ENCODE measurements at regions of chr5 and their contacts with region 1.

Region 1: DNA sequence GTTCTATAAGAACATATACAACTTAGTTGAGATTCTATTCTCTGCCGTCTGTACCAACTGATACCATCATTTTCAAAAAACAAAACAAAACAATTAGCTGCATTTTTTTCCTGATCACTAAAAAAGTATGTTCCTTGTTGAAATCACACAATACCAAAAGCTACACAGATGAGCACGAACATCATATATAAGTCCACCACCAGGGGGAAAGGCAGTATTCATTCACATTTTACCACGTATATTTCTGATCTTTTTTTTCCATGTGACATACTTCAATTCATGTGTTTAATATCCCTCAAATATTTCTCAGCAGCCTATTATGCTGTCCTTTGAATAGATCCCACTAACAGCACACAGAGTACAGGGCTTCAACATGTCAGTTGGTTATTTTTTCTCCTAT is 40.6 kb downstream of the IRX2 start:
- DNase-seq: peak; percentile 38
- ATAC-seq: peak; percentile 48
- H3K4me3 ChIP-seq: no peak overlapping the region
- H3K27ac ChIP-seq: no peak overlapping the region
- H3K4me1 ChIP-seq: no peaks in the 10 kb centered on the region
- H3K27me3 ChIP-seq: peaks cover 55% of the 10 kb centered on the region
- CTCF ChIP-seq: peak; percentile 59

Region 2: DNA sequence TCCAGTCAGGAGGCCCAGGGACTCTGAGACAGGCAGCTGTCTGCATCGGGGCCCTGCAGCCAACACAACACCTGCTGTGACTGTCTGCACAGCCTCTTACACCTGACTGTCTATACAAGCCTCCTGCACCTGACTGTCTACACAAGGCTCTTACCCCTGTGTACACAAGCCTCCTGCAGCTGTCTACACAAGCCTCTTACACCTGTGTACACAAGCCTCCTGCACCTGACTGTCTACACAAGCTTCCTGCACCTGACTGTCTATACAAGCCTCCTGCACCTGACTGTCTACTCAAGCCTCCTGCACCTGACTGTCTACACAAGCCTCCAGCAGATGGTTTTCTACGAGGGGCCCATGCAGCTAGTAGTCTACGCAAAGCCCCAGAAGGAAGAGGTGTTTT is 21.9 kb after region 1 on chr5:
- CTCF ChIA-PET with region 1: no interaction called
- POLR2A ChIA-PET with region 1: no interaction called
- intact Hi-C with region 1: no loop called
- DNase-seq: no peak
- ATAC-seq: no peak
- H3K4me3 ChIP-seq: no peak overlapping the region
- H3K27ac ChIP-seq: no peak overlapping the region
- H3K4me1 ChIP-seq: no peaks in the 10 kb centered on the region
- H3K27me3 ChIP-seq: peaks cover 66% of the 10 kb centered on the region
- CTCF ChIP-seq: no peak

Region 3: GRCh38 chr5:2746561-2747032 is 35.7 kb after region 1 on chr5:
- CTCF ChIA-PET with region 1: interaction called, 3 read pairs
- POLR2A ChIA-PET with region 1: no interaction called
- intact Hi-C with region 1: loop called (anchors 1 kb)
- DNase-seq: peak; percentile 49
- ATAC-seq: no peak
- H3K4me3 ChIP-seq: no peak overlapping the region
- H3K27ac ChIP-seq: no peak overlapping the region
- H3K4me1 ChIP-seq: peaks cover 6% of the 10 kb centered on the region; the same call in 1 of the 2 replicates
- H3K27me3 ChIP-seq: no peaks in the 10 kb centered on the region
- CTCF ChIP-seq: peak; percentile 56